H1 (cell line): ENCODE measurements at regions of chr7 and their contacts with region 1.

Region 1: DNA sequence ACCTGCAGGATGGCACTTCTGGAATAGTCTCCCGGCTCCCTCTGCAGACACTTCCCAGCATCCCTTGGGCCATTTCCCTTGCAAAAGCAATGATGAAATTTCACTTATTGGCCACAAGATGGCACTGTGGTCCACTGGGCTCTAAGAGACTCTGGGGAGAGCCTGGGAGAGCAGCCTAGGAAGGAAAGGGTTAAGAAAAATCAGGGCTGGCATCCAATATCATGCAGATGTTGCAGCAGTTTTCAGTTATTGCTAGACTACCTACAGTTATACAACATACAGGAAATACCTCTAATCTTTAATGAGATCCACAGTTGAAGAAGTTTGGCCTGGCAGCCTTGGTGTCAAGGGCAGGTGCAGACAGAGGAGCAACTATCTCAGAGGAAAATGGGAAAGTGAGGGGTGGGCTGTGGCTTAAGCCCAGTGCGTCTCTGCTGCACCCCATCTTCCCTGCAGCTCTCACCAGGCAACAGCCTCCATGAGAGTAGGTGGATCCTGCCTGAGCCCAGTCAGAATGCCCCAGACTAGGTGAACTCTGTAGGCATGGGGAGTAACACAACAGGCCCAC is 100.2 kb upstream of the PRSS58 start:
- DNase-seq: peak in 1 of 2 experiments; percentile 56
- H3K4me3 ChIP-seq: no peak overlapping the region
- H3K27ac ChIP-seq: no peak overlapping the region
- H3K4me1 ChIP-seq: peaks cover 5 to 13% (median 9%) of the 10 kb centered on the region in 4 experiments; a peak in 5 of 7 replicates
- H3K27me3 ChIP-seq: no peaks in the 10 kb centered on the region
- CTCF ChIP-seq: peak; percentile 32 to 86 (median 86)
- EP300 ChIP-seq: no peak
- POLR2A ChIP-seq: no peak
- RAD21 ChIP-seq: peak; percentile 78 to 88

Region 2: DNA sequence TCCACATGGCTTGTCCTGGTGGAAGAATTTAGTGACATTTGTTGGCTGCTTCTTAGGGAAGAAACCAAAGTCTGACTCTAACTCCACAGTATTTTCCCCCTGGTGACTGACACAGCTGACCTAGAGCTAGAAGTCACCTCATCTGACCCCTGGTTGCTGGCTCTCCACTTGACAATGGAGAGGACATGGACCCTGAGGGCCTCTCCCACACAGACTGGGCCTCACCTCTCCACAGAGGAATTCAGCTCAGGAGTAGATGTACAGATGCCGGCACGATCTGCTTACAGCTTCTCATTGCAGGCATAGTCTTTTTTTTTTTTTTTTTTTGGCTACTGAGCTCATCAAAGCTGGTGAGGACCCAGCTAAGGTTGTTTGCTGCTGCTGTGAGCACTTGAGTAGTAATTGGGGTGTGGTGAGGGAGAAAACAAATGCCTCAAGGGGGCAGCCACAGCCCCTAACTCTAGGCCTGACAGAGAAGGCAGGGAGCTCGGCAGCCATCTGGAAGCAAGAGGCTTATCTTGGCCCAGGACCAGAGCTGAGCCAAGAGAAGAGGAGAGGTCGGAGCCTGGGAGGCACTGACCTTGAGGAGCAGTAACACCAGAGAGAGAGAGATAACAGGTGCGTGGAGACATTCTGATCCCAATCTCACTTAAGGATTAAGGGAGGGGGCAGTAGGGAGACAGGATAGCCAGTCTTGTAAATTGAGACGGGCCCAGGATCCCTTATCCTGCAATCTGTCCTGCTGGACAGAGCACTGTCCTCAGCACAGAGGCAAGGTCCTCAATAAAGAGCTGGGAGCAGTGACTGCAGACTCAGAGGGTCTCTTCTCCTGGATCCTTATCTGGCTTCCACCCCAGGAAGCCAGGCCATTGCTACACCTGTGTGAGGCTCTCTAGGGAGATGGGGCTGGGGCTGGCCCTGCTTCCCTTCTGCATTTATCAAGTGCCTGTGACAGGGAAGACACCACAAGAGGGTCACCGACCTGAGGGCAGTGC is 109.6 kb before region 1 on chr7:
- CTCF ChIA-PET with region 1: no interaction called
- POLR2A ChIA-PET with region 1: no interaction called
- DNase-seq: peak in 1 of 2 experiments; percentile 51
- H3K4me3 ChIP-seq: no peak overlapping the region
- H3K27ac ChIP-seq: no peak overlapping the region
- H3K4me1 ChIP-seq: peaks cover 0 to 5% (median 2%) of the 10 kb centered on the region in 4 experiments; a peak in 2 of 7 replicates
- H3K27me3 ChIP-seq: no peaks in the 10 kb centered on the region
- CTCF ChIP-seq: peak in 1 of 3 experiments; percentile 30; a peak in 2 of 4 replicates
- EP300 ChIP-seq: no peak
- POLR2A ChIP-seq: no peak
- RAD21 ChIP-seq: peak in 1 of 2 experiments; percentile 34; a peak in 1 of 4 replicates

Region 3: GRCh38 chr7:142375666-142376313 is 17.8 kb after region 1 on chr7:
- CTCF ChIA-PET with region 1: interaction called, 60 read pairs
- POLR2A ChIA-PET with region 1: no interaction called
- DNase-seq: peak; percentile 43 to 83
- H3K4me3 ChIP-seq: no peak overlapping the region
- H3K27ac ChIP-seq: no peak overlapping the region
- H3K4me1 ChIP-seq: peaks cover 0 to 14% (median 5%) of the 10 kb centered on the region in 4 experiments; a peak in 6 of 7 replicates
- H3K27me3 ChIP-seq: no peaks in the 10 kb centered on the region
- CTCF ChIP-seq: peak; percentile 72 to 87 (median 85)
- EP300 ChIP-seq: no peak
- POLR2A ChIP-seq: no peak
- RAD21 ChIP-seq: peak; percentile 77 to 86

Region 4: DNA sequence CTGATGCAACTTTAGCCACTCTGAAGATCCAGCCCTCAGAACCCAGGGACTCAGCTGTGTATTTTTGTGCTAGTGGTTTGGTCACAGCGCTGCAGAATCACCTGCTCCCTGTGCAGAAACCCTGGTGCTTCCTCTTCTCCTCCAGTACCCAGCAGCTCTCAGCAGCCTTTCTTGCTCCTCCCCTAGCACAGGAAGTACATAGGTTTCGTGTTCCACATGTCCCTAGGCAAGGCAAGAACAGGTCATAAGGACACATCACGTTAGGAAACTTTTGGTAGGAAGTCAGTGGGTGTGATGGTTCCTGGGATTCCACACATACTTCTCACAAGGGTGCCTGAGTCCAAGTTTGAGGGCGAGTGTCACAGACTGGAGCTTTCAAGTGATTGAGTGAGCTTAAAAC is 223.3 kb after region 1 on chr7:
- CTCF ChIA-PET with region 1: no interaction called
- POLR2A ChIA-PET with region 1: no interaction called
- DNase-seq: no peak
- H3K4me3 ChIP-seq: no peak overlapping the region
- H3K27ac ChIP-seq: no peak overlapping the region
- H3K4me1 ChIP-seq: peaks cover 0 to 5% (median 3%) of the 10 kb centered on the region in 4 experiments; a peak in 3 of 7 replicates
- H3K27me3 ChIP-seq: no peaks in the 10 kb centered on the region
- CTCF ChIP-seq: no peak
- EP300 ChIP-seq: no peak
- POLR2A ChIP-seq: no peak
- RAD21 ChIP-seq: no peak